Mammary epithelial cell (primary cell): ENCODE measurements at regions of chr12 and their contacts with region 1.

Region 1: DNA sequence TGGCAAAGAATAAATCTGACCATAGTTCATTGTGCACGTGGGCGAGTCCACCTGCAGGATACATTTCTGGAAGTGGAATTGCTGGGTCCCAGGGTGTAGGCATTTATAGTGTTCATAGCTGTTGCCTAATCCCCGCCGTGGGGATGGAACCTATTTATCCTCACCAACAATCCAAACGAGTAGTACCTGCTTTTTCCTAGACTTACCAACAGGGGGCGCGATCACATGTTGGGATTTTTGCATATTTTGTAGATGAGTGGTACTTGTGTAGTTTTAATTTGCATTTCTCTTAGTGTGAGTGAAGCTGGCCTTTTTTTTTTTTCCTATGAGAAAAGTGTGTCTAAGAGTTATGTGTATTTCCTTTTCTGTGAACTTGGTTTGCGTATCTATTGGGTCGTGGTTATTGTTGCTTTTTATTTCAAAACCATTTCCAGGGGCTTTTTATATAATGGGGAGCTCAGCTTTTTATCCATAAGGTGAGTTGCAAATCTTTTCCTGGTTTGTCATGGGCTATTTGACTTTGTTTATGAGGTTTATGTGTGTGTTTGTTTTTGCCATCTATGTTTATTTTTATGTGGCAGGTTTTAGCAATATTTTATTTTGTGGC is 67.2 kb downstream of the CCDC92 start:
- DNase-seq: peak; percentile 74
- H3K4me3 ChIP-seq: no peak overlapping the region
- H3K27ac ChIP-seq: no peak overlapping the region
- H3K4me1 ChIP-seq: peaks cover 11% of the 10 kb centered on the region
- H3K27me3 ChIP-seq: peaks cover 2% of the 10 kb centered on the region
- CTCF ChIP-seq: peak; percentile 81 to 93

Region 2: GRCh38 chr12:123761841-123762714 is 143.3 kb before region 1 on chr12 and contains the start of gene DNAH10:
- CTCF ChIA-PET with region 1: no interaction called
- dilution Hi-C with region 1: no loop called
- in situ Hi-C with region 1: no loop called
- intact Hi-C with region 1: no loop called
- DNase-seq: no peak
- H3K4me3 ChIP-seq: peak within 1 kb of the TSS; percentile 19 to 51 (median 39)
- H3K27ac ChIP-seq: no peak within 1 kb of the TSS
- H3K4me1 ChIP-seq: peaks cover 9% of the 10 kb centered on the region
- H3K27me3 ChIP-seq: peaks cover 2% of the 10 kb centered on the region
- CTCF ChIP-seq: no peak
- total RNA-seq, gene DNAH10: 0.50 to 0.96 TPM

Region 3: GRCh38 chr12:123972457-123973401 is 67.3 kb after region 1 on chr12 and contains the starts of genes CCDC92 and ZNF664:
- CTCF ChIA-PET with region 1: no interaction called
- dilution Hi-C with region 1: no loop called
- in situ Hi-C with region 1: no loop called
- intact Hi-C with region 1: loop called (anchors 1 kb)
- DNase-seq: peak; percentile 89
- H3K4me3 ChIP-seq: peak within 1 kb of the TSS; percentile 81 to 98 (median 85)
- H3K27ac ChIP-seq: peak within 1 kb of the TSS; percentile 57
- H3K4me1 ChIP-seq: peaks cover 18% of the 10 kb centered on the region
- H3K27me3 ChIP-seq: no peaks in the 10 kb centered on the region
- CTCF ChIP-seq: peak in 1 of 2 donors; percentile 31
- total RNA-seq, gene CCDC92: 6.8 to 29.7 TPM
- total RNA-seq, gene ZNF664: 56.2 to 62.6 TPM

Region 4: DNA sequence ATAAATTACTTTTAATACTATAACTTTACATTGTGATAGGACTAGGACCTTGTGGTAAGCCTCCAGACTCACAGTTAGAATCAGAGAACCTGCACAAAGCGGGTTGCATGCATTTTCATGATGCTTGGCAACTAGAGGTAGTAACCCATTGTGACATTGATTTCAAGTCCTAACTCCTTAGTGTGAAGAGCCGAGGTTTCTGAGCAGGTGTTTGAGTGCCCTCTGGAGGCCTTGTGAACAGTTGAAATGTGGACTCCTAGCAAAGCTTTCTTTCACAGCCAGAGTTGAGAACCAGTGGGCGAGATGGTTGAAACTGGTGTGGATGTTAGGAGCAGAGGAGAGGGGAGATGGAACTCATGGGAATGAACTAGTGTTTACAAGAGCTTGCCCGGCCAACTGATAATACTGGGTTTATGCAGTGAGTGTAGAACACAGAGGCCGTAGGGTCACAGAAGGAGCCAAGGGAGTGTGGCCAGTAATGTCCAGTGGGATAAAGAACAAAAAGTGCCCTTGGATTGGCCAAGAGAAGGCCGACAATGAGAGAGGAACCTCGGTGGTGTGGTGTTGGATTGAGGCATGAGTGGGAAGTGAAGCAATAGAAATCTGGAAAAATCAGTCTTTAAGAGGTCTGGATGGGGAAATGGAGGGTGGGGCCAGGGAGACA is 78.5 kb after region 1 on chr12:
- CTCF ChIA-PET with region 1: no interaction called
- dilution Hi-C with region 1: no loop called
- in situ Hi-C with region 1: no loop called
- intact Hi-C with region 1: loop called (anchors 1 kb)
- DNase-seq: peak; percentile 57
- H3K4me3 ChIP-seq: no peak overlapping the region
- H3K27ac ChIP-seq: no peak overlapping the region
- H3K4me1 ChIP-seq: no peaks in the 10 kb centered on the region
- H3K27me3 ChIP-seq: no peaks in the 10 kb centered on the region
- CTCF ChIP-seq: peak; percentile 70 to 75

Region 5: GRCh38 chr12:124036674-124037109 is 131.3 kb after region 1 on chr12:
- CTCF ChIA-PET with region 1: no interaction called
- dilution Hi-C with region 1: no loop called
- in situ Hi-C with region 1: no loop called
- intact Hi-C with region 1: loop called (anchors 2 kb)
- DNase-seq: no peak
- H3K4me3 ChIP-seq: no peak overlapping the region
- H3K27ac ChIP-seq: no peak overlapping the region
- H3K4me1 ChIP-seq: no peaks in the 10 kb centered on the region
- H3K27me3 ChIP-seq: no peaks in the 10 kb centered on the region
- CTCF ChIP-seq: peak; percentile 82 to 95